ENCODE measurements at regions of chr2 and their contacts with region 1.

Region 1: DNA sequence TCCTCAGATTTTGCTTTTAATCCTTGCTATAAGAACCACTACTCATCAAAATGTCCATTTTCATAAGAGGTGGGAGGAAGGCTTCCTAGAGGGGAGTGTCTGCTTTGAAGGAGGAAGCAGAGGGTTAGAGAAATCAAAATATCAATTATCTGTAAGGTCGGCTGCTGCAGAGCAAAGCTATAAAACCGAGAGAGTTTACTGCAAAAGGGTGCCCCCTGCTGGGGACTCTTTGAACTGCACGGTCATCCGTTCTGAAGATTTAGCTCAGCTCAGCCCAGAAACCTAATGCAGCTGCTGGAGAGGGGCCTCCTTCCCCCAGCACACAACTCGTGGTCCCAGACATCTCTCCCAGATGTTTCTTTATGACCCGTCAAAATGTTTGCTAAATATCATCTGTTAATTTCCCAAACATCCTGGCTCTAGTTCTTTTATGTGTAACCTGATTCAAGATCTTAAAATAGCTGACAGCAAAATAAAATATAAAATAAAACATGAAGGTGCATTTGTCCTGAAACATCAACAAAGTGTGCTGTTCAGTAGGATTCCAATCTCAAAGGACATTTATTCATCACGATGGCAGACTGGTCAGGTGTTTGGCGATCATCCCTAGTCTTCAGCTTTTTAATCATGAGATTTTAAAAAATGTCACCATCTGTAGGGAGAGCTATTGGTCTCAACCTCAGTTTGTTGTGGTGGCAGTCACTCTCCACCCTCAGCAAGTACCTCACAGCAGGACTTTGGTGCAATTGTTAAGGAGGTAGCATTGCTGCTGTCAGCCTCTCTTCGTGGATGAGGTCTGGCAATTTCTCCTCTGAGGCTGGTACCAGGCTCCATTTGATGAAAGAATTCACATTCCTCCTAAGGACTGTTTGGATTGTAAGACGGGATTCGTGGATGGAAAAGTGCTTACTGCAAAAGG is 185.9 kb downstream of the MTX2 start:
- DNase-seq: peak; percentile 77 to 98
- H3K4me3 ChIP-seq: no peak overlapping the region
- CTCF ChIP-seq: peak in 1 of 3 donors; percentile 81
- POLR2A ChIP-seq: no peak

Region 2: DNA sequence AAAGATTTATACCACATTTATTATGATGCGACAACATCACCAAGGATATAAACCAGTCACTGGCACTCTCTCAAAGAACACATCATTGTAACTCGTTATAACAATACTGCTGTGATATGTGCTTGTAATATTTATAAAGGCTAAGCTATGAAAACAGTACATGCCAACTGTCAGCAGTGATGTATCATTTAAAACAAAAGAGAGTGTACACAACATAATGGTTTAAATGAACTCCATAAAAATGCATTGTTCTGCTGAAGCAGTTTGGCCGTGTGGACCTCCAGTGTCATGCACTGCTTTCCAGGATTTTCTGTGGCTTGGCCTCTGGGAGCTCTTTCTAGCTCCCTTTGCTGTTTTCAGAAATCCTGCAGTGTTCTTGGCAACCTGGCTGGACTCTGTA is 29.7 kb after region 1 on chr2:
- intact Hi-C with region 1: no loop called
- DNase-seq: no peak
- H3K4me3 ChIP-seq: no peak overlapping the region
- CTCF ChIP-seq: no peak
- POLR2A ChIP-seq: no peak

Region 3: GRCh38 chr2:176544991-176545956 is 90.1 kb after region 1 on chr2:
- intact Hi-C with region 1: loop called (anchors 10 kb)
- DNase-seq: no peak
- H3K4me3 ChIP-seq: no peak overlapping the region
- CTCF ChIP-seq: no peak
- POLR2A ChIP-seq: no peak

Measured in lower leg skin (tissue), 4 donors.